ENCODE measurements at regions of chr4 and their contacts with region 1.

Region 1: DNA sequence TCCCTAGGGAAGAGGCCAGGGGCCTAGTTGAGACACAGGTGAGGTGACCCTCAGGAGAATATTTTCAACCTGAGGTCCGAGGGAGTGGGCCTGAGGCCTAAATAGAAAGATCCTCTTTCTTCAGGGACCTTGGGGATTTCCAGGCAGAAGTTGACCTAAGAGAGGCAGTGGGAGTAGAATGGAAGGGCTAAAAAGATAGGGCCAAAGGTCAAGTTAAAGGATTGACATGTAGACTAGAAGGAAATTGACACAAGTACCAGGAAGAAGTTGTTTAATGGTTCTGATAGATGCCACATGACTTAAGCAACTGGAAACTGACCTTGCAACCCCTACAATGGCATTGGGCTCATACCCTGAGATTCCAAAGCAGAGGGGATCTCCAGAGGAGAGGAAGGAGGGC is 76.9 kb downstream of the SHROOM3 start:
- DNase-seq: no peak
- H3K4me3 Mint-ChIP-seq: no peak overlapping the region
- H3K27ac Mint-ChIP-seq: no peak overlapping the region
- H3K4me1 Mint-ChIP-seq: no peaks in the 10 kb centered on the region
- H3K27me3 Mint-ChIP-seq: no peaks in the 10 kb centered on the region

Region 2: GRCh38 chr4:76624241-76624681 is 112.3 kb after region 1 on chr4:
- intact Hi-C with region 1: no loop called
- DNase-seq: no peak
- H3K4me3 Mint-ChIP-seq: no peak overlapping the region
- H3K27ac Mint-ChIP-seq: no peak overlapping the region
- H3K4me1 Mint-ChIP-seq: peaks cover 3% of the 10 kb centered on the region
- H3K27me3 Mint-ChIP-seq: peaks cover 32% of the 10 kb centered on the region

Region 3: DNA sequence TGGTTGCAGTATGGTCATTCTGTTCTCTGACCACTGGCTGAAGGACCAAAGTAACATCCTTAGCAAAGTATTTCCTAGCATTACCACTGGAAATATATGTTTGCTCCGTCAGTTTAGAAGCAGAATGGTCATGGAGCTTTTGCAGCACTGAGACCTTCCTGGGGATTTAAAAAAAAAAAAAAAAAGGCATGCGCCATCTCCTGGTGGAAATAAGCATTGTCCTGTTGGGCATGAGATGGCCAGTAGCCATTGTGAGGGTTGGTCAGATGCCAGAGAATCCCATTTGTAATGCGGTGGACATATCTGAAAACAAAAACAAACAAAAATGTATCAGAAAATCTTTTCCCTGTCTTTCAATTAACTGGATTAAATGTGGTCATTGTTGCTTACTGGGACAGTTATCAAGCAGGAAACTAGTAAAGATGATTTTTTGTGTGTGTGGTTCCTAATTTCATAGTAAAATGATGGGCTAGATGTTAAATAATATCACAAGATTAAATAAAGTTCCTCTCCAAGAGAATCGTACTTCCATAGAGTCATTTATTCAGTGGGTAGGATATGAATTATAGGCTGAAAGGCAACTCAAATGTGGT is 246.4 kb after region 1 on chr4:
- intact Hi-C with region 1: loop called (anchors 2 kb)
- DNase-seq: peak; percentile 69
- H3K4me3 Mint-ChIP-seq: no peak overlapping the region
- H3K27ac Mint-ChIP-seq: no peak overlapping the region
- H3K4me1 Mint-ChIP-seq: peaks cover 3% of the 10 kb centered on the region
- H3K27me3 Mint-ChIP-seq: peaks cover 6% of the 10 kb centered on the region

Region 4: GRCh38 chr4:77044461-77045150 is 532.7 kb after region 1 on chr4:
- intact Hi-C with region 1: loop called (anchors 2 kb)
- DNase-seq: peak; percentile 59
- H3K4me3 Mint-ChIP-seq: no peak overlapping the region
- H3K27ac Mint-ChIP-seq: no peak overlapping the region
- H3K4me1 Mint-ChIP-seq: peaks cover 2% of the 10 kb centered on the region
- H3K27me3 Mint-ChIP-seq: no peaks in the 10 kb centered on the region